ENCODE measurements at regions of chr3 and their contacts with region 1.

Region 1: DNA sequence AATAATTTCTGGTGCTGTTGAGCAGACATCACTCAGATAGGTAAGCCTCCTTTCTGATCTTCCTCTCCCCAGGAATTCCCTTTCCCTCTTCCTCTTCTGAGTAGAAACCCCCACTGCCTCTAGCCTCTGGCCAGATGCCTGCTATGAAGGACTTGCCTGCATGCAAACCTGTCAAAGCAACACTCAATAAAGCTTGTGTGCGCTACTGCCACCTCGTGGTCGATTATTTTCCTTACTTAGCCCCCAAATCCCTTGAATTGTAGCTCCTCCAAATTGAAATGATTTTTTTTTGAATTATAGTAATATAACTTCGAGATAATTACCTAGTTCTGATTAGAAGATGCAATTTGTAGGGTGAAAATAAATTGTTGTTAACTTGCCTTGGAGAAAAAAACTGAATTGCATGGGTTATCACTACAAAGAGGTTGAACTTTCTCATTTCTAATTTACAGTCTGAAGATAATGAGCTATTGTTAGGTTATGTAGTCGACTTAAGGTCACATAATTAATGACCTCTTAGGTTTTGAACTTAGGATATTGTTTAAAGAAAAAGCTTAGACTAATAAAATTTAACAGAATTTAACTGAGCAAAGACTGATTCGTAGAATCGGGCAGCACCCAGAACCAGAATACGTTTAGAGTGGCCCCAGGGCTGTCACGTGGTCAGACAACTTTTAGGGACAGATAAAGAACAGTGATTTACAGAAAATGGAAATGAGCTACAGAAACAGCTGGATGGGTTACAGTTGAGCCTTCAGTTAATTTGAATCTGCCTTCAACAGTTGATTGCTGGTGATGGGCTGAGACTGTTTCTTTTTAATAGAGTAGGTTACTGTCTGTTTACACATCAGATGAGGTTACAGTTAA is 269.3 kb downstream of the ARPP21 start:
- DNase-seq: no peak
- H3K4me3 ChIP-seq: no peak overlapping the region
- H3K27ac ChIP-seq: no peak overlapping the region
- H3K4me1 ChIP-seq: no peaks in the 10 kb centered on the region
- H3K27me3 ChIP-seq: no peaks in the 10 kb centered on the region
- CTCF ChIP-seq: peak in 2 of 3 donors; percentile 36
- POLR2A ChIP-seq: no peak

Region 2: GRCh38 chr3:35954413-35954812 is 45.8 kb after region 1 on chr3:
- intact Hi-C with region 1: no loop called
- DNase-seq: no peak
- H3K4me3 ChIP-seq: no peak overlapping the region
- H3K27ac ChIP-seq: no peak overlapping the region
- H3K4me1 ChIP-seq: no peaks in the 10 kb centered on the region
- H3K27me3 ChIP-seq: no peaks in the 10 kb centered on the region
- CTCF ChIP-seq: no peak
- POLR2A ChIP-seq: no peak

Region 3: GRCh38 chr3:36852071-36852470 is 943.5 kb after region 1 on chr3:
- intact Hi-C with region 1: loop called (anchors 5 kb)
- DNase-seq: no peak
- H3K4me3 ChIP-seq: no peak overlapping the region
- H3K27ac ChIP-seq: no peak overlapping the region
- H3K4me1 ChIP-seq: no peaks in the 10 kb centered on the region
- H3K27me3 ChIP-seq: no peaks in the 10 kb centered on the region
- CTCF ChIP-seq: no peak
- POLR2A ChIP-seq: no peak

Measured in breast epithelium (tissue), 4 donors.